Naive thymus-derived CD4-positive, alpha-beta T cell (primary cell): ENCODE measurements at regions of chr4 and their contacts with region 1.

Region 1: GRCh38 chr4:184825896-184826690 is at the start of gene ACSL1:
- DNase-seq: peak; percentile 63 to 83 (median 75)
- ATAC-seq: peak; percentile 95
- H3K4me3 ChIP-seq: peak within 1 kb of the TSS; percentile 59
- H3K4me3 Mint-ChIP-seq: peak within 1 kb of the TSS; percentile 89 to 94 (median 91)
- H3K27ac ChIP-seq: peak within 1 kb of the TSS; percentile 73
- H3K27ac Mint-ChIP-seq: peak within 1 kb of the TSS; percentile 79 to 91 (median 90)
- H3K4me1 ChIP-seq: peaks cover 4 to 7% of the 10 kb centered on the region in 2 donors
- H3K4me1 Mint-ChIP-seq: peaks cover 21 to 46% (median 33%) of the 10 kb centered on the region in 7 donors
- H3K27me3 ChIP-seq: no peaks in the 10 kb centered on the region
- H3K27me3 Mint-ChIP-seq: peaks cover 0 to 25% (median 0%) of the 10 kb centered on the region in 5 donors
- total RNA-seq, gene ACSL1: 9.5 to 80.1 (median 20.4) TPM

Region 2: DNA sequence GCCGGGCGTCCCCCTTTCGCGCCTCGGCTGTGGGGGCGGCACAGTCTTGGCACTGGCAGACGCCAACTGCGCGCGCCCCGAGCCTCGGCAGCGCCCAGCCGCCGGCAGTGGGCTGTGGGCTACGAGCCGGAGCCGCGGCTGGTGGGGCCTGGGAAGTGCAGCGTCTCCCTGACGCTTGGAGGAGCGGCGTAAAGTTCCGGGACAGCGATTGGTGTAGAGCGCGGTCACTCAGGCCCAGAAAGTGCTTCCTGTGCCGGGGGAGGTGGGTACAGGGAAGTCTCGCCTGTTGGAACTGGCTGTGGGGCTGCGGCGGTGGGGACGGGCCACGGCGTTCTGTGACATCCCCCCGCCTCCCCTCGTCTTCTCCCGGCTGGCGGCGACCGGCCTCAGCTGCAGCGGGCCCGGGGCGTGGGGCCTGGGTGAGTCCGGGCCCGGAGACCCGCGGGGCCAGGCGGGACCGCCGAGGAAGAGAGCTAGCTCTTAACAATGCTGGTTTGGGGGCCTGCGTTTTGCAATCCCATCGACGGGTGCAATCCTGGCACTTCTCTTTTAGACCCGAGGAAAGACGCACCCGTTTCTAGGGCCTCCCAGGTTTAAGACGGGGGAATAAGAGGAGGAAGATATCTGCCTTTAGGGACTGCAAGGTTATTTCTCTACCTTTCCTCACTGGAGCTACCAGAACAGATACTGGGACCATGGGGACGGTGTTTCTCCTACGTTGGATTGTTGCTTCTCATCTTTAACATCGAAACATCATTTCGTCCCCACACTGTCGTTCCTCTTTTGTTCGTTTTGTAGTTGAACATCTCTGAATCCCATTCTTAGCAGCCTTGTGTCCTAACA is 1166.8 kb before region 1 on chr4 and contains the starts of genes RWDD4 and TRAPPC11:
- CTCF ChIA-PET with region 1: no interaction called
- POLR2A ChIA-PET with region 1: no interaction called
- intact Hi-C with region 1: loop called in 1 of 2 experiments (anchors 2 kb)
- DNase-seq: peak; percentile 83 to 97 (median 95)
- ATAC-seq: peak; percentile 99
- H3K4me3 ChIP-seq: peak within 1 kb of the TSS; percentile 87
- H3K4me3 Mint-ChIP-seq: peak within 1 kb of the TSS; percentile 91 to 98 (median 96)
- H3K27ac ChIP-seq: peak within 1 kb of the TSS; percentile 96
- H3K27ac Mint-ChIP-seq: peak within 1 kb of the TSS; percentile 90 to 99 (median 95)
- H3K4me1 ChIP-seq: peaks cover 14 to 19% of the 10 kb centered on the region in 2 donors
- H3K4me1 Mint-ChIP-seq: peaks cover 35 to 48% (median 38%) of the 10 kb centered on the region in 7 donors
- H3K27me3 ChIP-seq: no peaks in the 10 kb centered on the region
- H3K27me3 Mint-ChIP-seq: no peaks in the 10 kb centered on the region
- total RNA-seq, gene RWDD4: 9.3 to 15.8 (median 11.6) TPM
- total RNA-seq, gene TRAPPC11: 26.3 to 48.8 (median 35.6) TPM

Region 3: GRCh38 chr4:183920512-183920911 is 905.6 kb before region 1 on chr4:
- CTCF ChIA-PET with region 1: no interaction called
- POLR2A ChIA-PET with region 1: no interaction called
- intact Hi-C with region 1: no loop called
- DNase-seq: no peak
- ATAC-seq: no peak
- H3K4me3 ChIP-seq: no peak overlapping the region
- H3K4me3 Mint-ChIP-seq: no peak overlapping the region
- H3K27ac ChIP-seq: no peak overlapping the region
- H3K27ac Mint-ChIP-seq: no peak overlapping the region
- H3K4me1 ChIP-seq: no peaks in the 10 kb centered on the region
- H3K4me1 Mint-ChIP-seq: no peaks in the 10 kb centered on the region
- H3K27me3 ChIP-seq: no peaks in the 10 kb centered on the region
- H3K27me3 Mint-ChIP-seq: peaks cover 0 to 28% (median 9%) of the 10 kb centered on the region in 5 donors

Region 4: DNA sequence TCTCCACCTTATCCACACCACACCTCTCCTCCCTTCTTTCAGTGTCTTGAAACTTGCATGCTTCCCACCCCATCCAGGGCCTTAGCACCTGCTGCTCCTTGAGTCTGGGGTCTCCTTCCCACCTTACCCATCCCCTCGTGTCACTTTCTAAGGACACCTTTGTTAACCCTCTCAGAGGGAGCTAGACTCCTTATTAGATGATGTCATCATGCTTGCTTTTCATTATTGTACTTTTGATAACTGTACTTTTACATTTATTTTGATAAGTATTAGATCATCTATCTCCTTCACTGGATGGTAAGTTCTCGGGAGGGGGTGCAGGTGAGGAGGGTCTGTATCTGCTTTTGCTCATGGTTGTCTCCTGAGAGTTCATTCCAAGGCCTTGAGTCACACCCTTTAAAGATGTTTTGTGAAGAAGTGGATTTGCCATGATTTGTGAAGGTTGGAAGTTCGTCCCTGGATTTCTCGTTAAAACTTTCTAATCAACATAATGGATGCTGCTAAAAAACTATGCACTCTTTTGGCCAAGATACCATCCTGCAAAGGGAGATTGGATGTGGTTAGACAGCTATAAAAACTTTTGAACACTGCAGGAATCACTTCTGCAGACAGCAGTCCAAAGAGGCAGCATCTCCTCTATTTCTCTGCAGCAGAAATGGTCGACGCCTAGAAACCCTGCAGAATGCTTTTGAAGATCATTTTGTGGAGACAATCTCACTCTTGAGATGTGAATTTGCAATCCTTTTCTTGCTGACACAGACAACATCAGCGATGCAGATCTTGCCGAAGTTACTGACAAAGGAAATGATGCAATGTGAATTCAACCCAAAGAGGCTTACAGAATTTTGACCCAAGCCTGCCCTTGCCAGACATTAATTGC is 678.0 kb before region 1 on chr4:
- CTCF ChIA-PET with region 1: no interaction called
- POLR2A ChIA-PET with region 1: no interaction called
- intact Hi-C with region 1: no loop called
- DNase-seq: no peak
- ATAC-seq: no peak
- H3K4me3 ChIP-seq: no peak overlapping the region
- H3K4me3 Mint-ChIP-seq: peak overlapping the region in 1 of 10 donors; percentile 38
- H3K27ac ChIP-seq: no peak overlapping the region
- H3K27ac Mint-ChIP-seq: peak overlapping the region in 1 of 9 donors; percentile 32
- H3K4me1 ChIP-seq: no peaks in the 10 kb centered on the region
- H3K4me1 Mint-ChIP-seq: peaks cover 0 to 23% (median 0%) of the 10 kb centered on the region in 7 donors
- H3K27me3 ChIP-seq: no peaks in the 10 kb centered on the region
- H3K27me3 Mint-ChIP-seq: peaks cover 0 to 26% (median 5%) of the 10 kb centered on the region in 5 donors

Region 5: DNA sequence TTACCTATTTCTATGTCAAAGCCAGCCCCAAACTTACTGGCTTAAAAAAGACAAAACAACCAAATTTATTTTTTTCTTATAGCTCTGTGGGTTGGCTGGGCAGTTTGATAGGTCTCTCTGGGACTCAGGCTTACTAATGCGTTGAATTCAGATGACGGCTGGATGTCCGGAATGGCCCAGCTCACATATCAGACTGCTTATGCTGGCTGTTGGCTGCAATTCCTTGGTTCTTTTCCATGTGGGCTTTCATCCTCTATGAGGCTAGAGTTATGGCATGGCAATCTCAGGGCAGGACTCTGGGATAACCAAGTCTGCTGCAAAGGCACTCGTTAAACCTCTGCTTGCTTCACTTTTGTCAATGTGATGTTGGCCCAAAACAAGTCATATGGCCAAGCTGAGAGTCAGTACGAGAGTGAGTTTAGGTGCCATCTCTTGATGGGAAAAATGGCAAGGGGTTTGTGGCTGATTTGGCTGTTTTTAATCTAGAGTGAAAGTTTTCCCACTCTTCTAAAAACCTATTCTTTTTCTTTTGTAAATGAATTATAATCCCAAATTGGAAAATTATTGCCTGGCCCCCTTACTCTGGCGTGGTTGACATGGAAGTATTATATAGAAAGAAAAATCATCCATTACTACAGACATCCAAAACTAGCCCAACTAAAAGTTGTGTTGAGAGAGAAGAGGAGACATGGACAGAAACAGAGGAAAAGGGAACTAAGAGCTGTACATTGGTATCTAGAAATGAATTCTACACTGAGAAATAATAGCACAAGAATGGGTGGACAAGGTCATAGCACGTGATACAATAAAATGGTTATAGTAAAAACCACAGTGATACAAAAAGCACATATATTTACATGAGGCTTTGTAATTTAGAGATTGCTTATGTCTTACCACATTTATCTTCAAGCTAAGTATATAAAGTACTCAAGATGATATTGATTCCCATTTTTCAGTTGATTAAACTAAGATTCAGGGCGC is 169.9 kb before region 1 on chr4:
- CTCF ChIA-PET with region 1: no interaction called
- POLR2A ChIA-PET with region 1: no interaction called
- intact Hi-C with region 1: no loop called
- DNase-seq: no peak
- ATAC-seq: no peak
- H3K4me3 ChIP-seq: no peak overlapping the region
- H3K4me3 Mint-ChIP-seq: no peak overlapping the region
- H3K27ac ChIP-seq: no peak overlapping the region
- H3K27ac Mint-ChIP-seq: no peak overlapping the region
- H3K4me1 ChIP-seq: no peaks in the 10 kb centered on the region
- H3K4me1 Mint-ChIP-seq: peaks cover 4 to 17% (median 8%) of the 10 kb centered on the region in 7 donors
- H3K27me3 ChIP-seq: no peaks in the 10 kb centered on the region
- H3K27me3 Mint-ChIP-seq: no peaks in the 10 kb centered on the region

Region 6: GRCh38 chr4:184762100-184762499 is 64.0 kb before region 1 on chr4:
- CTCF ChIA-PET with region 1: no interaction called
- POLR2A ChIA-PET with region 1: no interaction called
- intact Hi-C with region 1: loop called (anchors 1 kb)
- DNase-seq: peak in 8 of 9 donors; percentile 38 to 84 (median 75)
- ATAC-seq: peak; percentile 96
- H3K4me3 ChIP-seq: no peak overlapping the region
- H3K4me3 Mint-ChIP-seq: peak overlapping the region; percentile 6 to 78 (median 66)
- H3K27ac ChIP-seq: peak overlapping the region; percentile 36
- H3K27ac Mint-ChIP-seq: peak overlapping the region; percentile 83 to 94 (median 87)
- H3K4me1 ChIP-seq: peaks cover 5 to 14% of the 10 kb centered on the region in 2 donors
- H3K4me1 Mint-ChIP-seq: peaks cover 0 to 23% (median 20%) of the 10 kb centered on the region in 7 donors
- H3K27me3 ChIP-seq: no peaks in the 10 kb centered on the region
- H3K27me3 Mint-ChIP-seq: no peaks in the 10 kb centered on the region

Region 7: GRCh38 chr4:184968784-184969201 is 142.7 kb after region 1 on chr4:
- CTCF ChIA-PET with region 1: no interaction called
- POLR2A ChIA-PET with region 1: no interaction called
- intact Hi-C with region 1: loop called in 1 of 2 experiments (anchors 1 kb)
- DNase-seq: peak in 1 of 9 donors; percentile 16
- ATAC-seq: peak; percentile 17
- H3K4me3 ChIP-seq: no peak overlapping the region
- H3K4me3 Mint-ChIP-seq: peak overlapping the region in 1 of 10 donors; percentile 14
- H3K27ac ChIP-seq: no peak overlapping the region
- H3K27ac Mint-ChIP-seq: peak overlapping the region in 3 of 9 donors; percentile 5 to 90 (median 77)
- H3K4me1 ChIP-seq: no peaks in the 10 kb centered on the region
- H3K4me1 Mint-ChIP-seq: peaks cover 0 to 10% (median 4%) of the 10 kb centered on the region in 7 donors
- H3K27me3 ChIP-seq: no peaks in the 10 kb centered on the region
- H3K27me3 Mint-ChIP-seq: peaks cover 9 to 22% (median 16%) of the 10 kb centered on the region in 5 donors

Region 8: DNA sequence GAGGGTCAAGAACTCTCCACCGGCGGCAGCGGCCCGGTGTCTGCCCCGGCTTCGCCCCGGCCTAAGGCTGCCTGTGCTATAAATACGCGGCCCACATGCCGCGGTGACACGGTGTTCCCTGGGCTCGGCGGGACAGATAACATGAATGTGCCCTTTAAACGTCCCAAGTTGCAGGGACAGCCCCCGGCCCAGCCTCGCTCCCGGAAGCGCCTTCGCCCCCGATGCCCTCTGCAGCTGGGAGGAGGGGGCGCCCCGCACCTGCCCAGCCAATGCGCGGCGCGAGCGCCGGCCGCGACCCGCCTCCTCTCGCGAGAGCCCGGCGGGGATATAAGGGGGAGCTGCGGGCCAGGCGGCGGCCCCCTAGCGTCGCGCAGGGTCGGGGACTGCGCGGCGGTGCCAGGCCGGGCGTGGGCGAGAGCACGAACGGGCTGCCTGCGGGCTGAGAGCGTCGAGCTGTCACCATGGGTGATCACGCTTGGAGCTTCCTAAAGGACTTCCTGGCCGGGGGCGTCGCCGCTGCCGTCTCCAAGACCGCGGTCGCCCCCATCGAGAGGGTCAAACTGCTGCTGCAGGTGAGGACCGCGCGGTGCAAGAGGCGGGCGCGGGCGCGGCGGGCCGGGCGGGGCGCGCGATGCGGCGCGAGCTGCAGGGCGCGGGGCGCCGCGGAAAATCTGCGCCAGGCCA is 317.0 kb after region 1 on chr4 and contains the start of gene SLC25A4:
- CTCF ChIA-PET with region 1: no interaction called
- POLR2A ChIA-PET with region 1: no interaction called
- intact Hi-C with region 1: loop called in 1 of 2 experiments (anchors 5 kb)
- DNase-seq: peak; percentile 68 to 81 (median 75)
- ATAC-seq: peak; percentile 95
- H3K4me3 ChIP-seq: peak within 1 kb of the TSS; percentile 57
- H3K4me3 Mint-ChIP-seq: peak within 1 kb of the TSS; percentile 84 to 95 (median 90)
- H3K27ac ChIP-seq: peak within 1 kb of the TSS; percentile 52
- H3K27ac Mint-ChIP-seq: peak within 1 kb of the TSS in 7 of 9 donors; percentile 4 to 89 (median 83)
- H3K4me1 ChIP-seq: peaks cover 4 to 13% of the 10 kb centered on the region in 2 donors
- H3K4me1 Mint-ChIP-seq: peaks cover 11 to 15% (median 12%) of the 10 kb centered on the region in 7 donors
- H3K27me3 ChIP-seq: peaks cover 0 to 3% of the 10 kb centered on the region in 2 donors
- H3K27me3 Mint-ChIP-seq: peaks cover 15 to 69% (median 26%) of the 10 kb centered on the region in 5 donors
- total RNA-seq, gene SLC25A4: 0.60 to 7.2 (median 4.9) TPM

Region 9: GRCh38 chr4:185395956-185396723 is 570.0 kb after region 1 on chr4:
- CTCF ChIA-PET with region 1: no interaction called
- POLR2A ChIA-PET with region 1: no interaction called
- intact Hi-C with region 1: loop called (anchors 2 to 10 kb)
- DNase-seq: peak; percentile 93 to 100 (median 97)
- ATAC-seq: peak; percentile 97
- H3K4me3 ChIP-seq: peak overlapping the region; percentile 69
- H3K4me3 Mint-ChIP-seq: peak overlapping the region; percentile 82 to 100 (median 97)
- H3K27ac ChIP-seq: peak overlapping the region; percentile 97
- H3K27ac Mint-ChIP-seq: peak overlapping the region; percentile 90 to 100 (median 99)
- H3K4me1 ChIP-seq: peaks cover 12 to 15% of the 10 kb centered on the region in 2 donors
- H3K4me1 Mint-ChIP-seq: peaks cover 14 to 57% (median 27%) of the 10 kb centered on the region in 7 donors
- H3K27me3 ChIP-seq: no peaks in the 10 kb centered on the region
- H3K27me3 Mint-ChIP-seq: no peaks in the 10 kb centered on the region